HEK293 (cell line): ENCODE measurements at regions of chr1 and their contacts with region 1.

Region 1: DNA sequence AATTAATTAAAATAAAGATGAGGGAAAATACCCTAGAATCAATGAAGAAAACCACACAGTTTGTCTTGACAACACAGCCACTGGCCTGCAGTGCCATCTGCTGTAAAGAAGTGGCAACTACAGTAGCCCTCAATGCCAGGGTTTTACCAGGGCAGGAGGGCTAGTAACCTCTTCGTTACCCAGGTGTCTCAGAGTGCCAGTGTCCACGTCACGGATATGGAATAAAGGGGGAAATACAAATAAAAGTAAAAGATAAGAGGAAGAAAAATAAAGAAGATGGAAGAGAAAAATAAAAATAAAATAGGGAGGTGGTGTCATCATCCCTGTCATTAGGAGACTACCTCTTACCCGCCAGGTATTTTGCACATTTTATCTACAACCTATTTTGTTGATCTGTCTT is 14.2 kb upstream of the SLC44A3 start:
- H3K4me3 ChIP-seq: no peak overlapping the region
- H3K27ac ChIP-seq: no peak overlapping the region
- H3K4me1 ChIP-seq: peaks cover 9% of the 10 kb centered on the region
- CTCF ChIP-seq: peak; percentile 75

Region 2: DNA sequence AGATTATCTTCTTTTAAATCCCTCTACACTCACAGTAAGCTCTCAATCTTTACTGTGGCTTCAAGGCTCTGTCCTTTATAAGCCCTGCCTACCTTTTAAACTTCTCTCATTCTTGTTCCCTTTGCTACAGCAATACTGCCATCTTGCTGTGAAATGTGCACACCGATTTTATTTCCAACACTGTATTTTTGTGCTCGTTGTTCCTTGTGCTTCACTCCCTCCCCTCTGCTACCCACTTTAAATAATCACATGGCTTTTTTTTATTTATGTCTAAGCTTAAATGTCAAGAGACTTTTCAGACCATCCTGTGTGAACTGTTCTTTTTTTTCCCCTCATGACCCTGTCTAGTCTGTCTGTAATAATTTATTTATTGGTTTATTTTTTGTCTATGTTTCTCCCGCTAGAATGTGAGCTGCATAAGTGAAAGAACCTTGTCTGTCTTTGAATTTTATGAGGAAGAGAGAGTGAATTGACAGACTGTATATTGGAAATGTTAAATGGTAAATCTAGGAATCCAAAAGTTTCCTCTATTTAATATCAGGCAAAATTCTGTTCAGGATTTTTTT is 342.1 kb before region 1 on chr1:
- CTCF ChIA-PET with region 1: interaction called, 10 read pairs
- POLR2A ChIA-PET with region 1: no interaction called
- H3K4me3 ChIP-seq: no peak overlapping the region
- H3K27ac ChIP-seq: no peak overlapping the region
- H3K4me1 ChIP-seq: no peaks in the 10 kb centered on the region
- CTCF ChIP-seq: no peak

Region 3: GRCh38 chr1:94481473-94481933 is 324.4 kb before region 1 on chr1:
- CTCF ChIA-PET with region 1: interaction called, 43 read pairs
- POLR2A ChIA-PET with region 1: no interaction called
- H3K4me3 ChIP-seq: no peak overlapping the region
- H3K27ac ChIP-seq: no peak overlapping the region
- H3K4me1 ChIP-seq: no peaks in the 10 kb centered on the region
- CTCF ChIP-seq: no peak

Region 4: GRCh38 chr1:94522304-94522703 is 283.6 kb before region 1 on chr1:
- CTCF ChIA-PET with region 1: interaction called, 79 read pairs
- POLR2A ChIA-PET with region 1: no interaction called
- H3K4me3 ChIP-seq: no peak overlapping the region
- H3K27ac ChIP-seq: no peak overlapping the region
- H3K4me1 ChIP-seq: no peaks in the 10 kb centered on the region
- CTCF ChIP-seq: peak; percentile 45

Region 5: DNA sequence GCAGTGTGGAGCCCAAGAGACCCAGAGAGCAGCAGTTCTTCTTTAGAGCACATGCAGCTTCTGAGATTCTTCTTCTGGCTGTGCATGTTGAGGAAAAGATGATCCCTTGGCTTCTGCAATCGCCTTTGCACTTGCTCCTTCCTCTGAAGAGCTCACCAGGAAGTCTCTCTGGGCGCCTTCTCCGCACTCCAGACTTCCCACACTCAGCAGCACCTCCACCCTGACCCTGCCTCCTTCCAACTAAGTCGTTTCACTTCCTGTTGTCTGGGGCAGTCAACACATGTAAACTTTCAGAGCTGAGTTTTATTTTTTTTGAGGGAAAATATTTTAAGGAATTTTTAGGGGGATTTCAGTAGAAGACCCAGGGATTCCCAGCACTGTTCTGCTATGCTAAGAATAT is 190.9 kb before region 1 on chr1:
- CTCF ChIA-PET with region 1: interaction called, 14 read pairs
- POLR2A ChIA-PET with region 1: no interaction called
- H3K4me3 ChIP-seq: no peak overlapping the region
- H3K27ac ChIP-seq: no peak overlapping the region
- H3K4me1 ChIP-seq: no peaks in the 10 kb centered on the region
- CTCF ChIP-seq: no peak